Sigmoid colon (tissue), 7 donors: ENCODE measurements at regions of chr16 and their contacts with region 1.

Region 1: DNA sequence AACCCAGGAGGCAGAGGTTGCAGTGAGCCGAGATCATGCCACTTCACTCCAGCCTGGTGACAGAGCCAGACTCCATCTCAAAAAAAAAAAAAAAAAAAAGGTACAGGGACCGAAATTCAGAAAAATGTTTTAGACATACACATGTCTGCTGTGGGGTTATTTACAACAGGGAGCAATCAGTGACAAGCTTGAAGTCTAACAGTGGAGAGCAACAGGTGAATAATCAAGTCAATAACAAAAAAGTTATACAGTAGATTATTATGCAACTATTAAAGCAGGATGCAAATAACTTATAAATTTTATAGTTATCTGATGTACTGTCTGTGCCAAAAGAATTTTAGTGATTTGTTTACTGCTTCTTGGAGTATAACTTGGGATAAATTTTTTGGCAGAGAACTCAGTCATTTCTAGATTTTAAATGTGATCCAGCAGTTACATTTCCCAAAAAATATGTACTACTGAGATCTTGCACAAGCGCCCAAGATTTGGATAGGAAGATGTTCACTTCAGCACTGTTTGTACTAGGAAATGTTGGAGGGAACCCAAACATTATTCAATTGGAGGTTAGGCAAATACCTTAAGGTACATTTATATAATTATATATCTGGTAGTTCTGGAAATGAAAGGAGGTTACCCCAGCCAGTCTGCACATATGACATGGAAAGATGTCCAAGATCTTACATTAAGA is 34.1 kb downstream of the EEF2K start:
- DNase-seq: no peak
- H3K4me3 ChIP-seq: no peak overlapping the region
- H3K27ac ChIP-seq: peak overlapping the region; percentile 67 to 77 (median 75)
- H3K4me1 ChIP-seq: peaks cover 0 to 35% (median 28%) of the 10 kb centered on the region in 4 donors
- H3K27me3 ChIP-seq: no peaks in the 10 kb centered on the region
- CTCF ChIP-seq: no peak
- EP300 ChIP-seq: peak in 1 of 4 donors; percentile 70
- POLR2A ChIP-seq: no peak

Region 2: GRCh38 chr16:22123146-22123545 is 117.0 kb before region 1 on chr16:
- intact Hi-C with region 1: no loop called
- DNase-seq: no peak
- H3K4me3 ChIP-seq: no peak overlapping the region
- H3K27ac ChIP-seq: no peak overlapping the region
- H3K4me1 ChIP-seq: no peaks in the 10 kb centered on the region
- H3K27me3 ChIP-seq: no peaks in the 10 kb centered on the region
- CTCF ChIP-seq: no peak
- EP300 ChIP-seq: no peak
- POLR2A ChIP-seq: no peak

Region 3: GRCh38 chr16:22190776-22191531 is 49.2 kb before region 1 on chr16:
- intact Hi-C with region 1: no loop called
- DNase-seq: peak; percentile 100
- H3K4me3 ChIP-seq: peak overlapping the region; percentile 35 to 87 (median 66)
- H3K27ac ChIP-seq: peak overlapping the region; percentile 90 to 96 (median 93)
- H3K4me1 ChIP-seq: peaks cover 0 to 36% (median 30%) of the 10 kb centered on the region in 4 donors
- H3K27me3 ChIP-seq: no peaks in the 10 kb centered on the region
- CTCF ChIP-seq: no peak
- EP300 ChIP-seq: no peak
- POLR2A ChIP-seq: peak; percentile 90 to 92

Region 4: DNA sequence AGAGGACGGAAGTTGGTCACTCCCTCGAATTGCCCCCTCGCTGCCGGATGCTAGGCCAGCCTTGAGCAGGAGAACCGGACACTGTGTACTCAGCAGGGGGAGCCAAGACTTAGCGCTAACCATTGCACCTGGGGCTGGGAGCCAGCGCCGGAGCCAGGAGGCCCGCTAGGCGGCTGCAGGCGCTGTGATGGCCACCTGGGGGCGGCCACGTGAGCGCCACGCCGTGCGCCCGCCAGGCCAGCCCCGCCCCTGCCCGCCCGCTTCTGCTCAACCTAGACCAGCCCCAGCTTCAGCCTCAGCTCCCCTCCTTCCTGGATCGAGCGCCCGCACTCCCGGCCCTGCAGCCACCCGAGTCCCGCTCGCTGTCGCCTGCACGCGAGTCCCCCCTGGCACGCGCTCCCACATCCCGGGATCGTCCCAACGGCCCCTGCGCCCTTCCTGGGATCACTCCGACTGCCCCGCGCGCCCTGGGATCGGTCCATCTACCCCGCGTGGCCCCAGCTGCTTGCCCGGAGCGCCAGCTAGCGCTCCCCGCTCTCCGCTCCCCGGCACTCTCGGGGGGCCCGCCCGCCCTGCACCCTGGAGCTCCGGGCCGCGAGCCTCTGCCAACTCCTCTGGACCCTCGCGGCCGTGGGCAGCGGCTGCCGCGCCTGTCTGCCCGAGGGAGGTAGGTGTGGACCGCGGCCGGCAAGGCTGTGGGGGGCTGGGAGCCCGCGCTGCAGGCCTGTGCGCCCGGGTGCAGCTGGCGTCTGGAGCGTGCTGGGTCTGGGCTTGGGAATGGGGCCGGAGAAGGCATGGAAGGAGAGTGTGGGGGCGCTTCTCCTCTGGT is 33.9 kb before region 1 on chr16 and contains the start of gene EEF2K:
- intact Hi-C with region 1: loop called (anchors 5 kb)
- DNase-seq: peak; percentile 98
- H3K4me3 ChIP-seq: peak within 1 kb of the TSS; percentile 72 to 99 (median 98)
- H3K27ac ChIP-seq: peak within 1 kb of the TSS; percentile 94 to 98 (median 96)
- H3K4me1 ChIP-seq: peaks cover 0 to 49% (median 43%) of the 10 kb centered on the region in 4 donors
- H3K27me3 ChIP-seq: no peaks in the 10 kb centered on the region
- CTCF ChIP-seq: peak; percentile 80 to 89 (median 85)
- EP300 ChIP-seq: peak in 2 of 4 donors; percentile 24 to 46
- POLR2A ChIP-seq: peak; percentile 41 to 45
- total RNA-seq, gene EEF2K: 37.2 to 54.8 (median 44.2) TPM

Region 5: GRCh38 chr16:22284637-22285036 is 44.5 kb after region 1 on chr16:
- intact Hi-C with region 1: no loop called
- DNase-seq: no peak
- H3K4me3 ChIP-seq: no peak overlapping the region
- H3K27ac ChIP-seq: no peak overlapping the region
- H3K4me1 ChIP-seq: peaks cover 0 to 6% (median 0%) of the 10 kb centered on the region in 4 donors
- H3K27me3 ChIP-seq: no peaks in the 10 kb centered on the region
- CTCF ChIP-seq: no peak
- EP300 ChIP-seq: no peak
- POLR2A ChIP-seq: no peak